Ascending aorta (tissue), 2 donors: ENCODE measurements at regions of chr2 and their contacts with region 1.

Region 1: GRCh38 chr2:11129598-11130449 is 25.4 kb upstream of the SLC66A3 start:
- DNase-seq: no peak
- H3K4me3 ChIP-seq: peak overlapping the region; percentile 51 to 54
- H3K27ac ChIP-seq: no peak overlapping the region
- H3K4me1 ChIP-seq: peaks cover 4 to 24% of the 10 kb centered on the region in 2 donors
- H3K27me3 ChIP-seq: no peaks in the 10 kb centered on the region
- CTCF ChIP-seq: no peak

Region 2: DNA sequence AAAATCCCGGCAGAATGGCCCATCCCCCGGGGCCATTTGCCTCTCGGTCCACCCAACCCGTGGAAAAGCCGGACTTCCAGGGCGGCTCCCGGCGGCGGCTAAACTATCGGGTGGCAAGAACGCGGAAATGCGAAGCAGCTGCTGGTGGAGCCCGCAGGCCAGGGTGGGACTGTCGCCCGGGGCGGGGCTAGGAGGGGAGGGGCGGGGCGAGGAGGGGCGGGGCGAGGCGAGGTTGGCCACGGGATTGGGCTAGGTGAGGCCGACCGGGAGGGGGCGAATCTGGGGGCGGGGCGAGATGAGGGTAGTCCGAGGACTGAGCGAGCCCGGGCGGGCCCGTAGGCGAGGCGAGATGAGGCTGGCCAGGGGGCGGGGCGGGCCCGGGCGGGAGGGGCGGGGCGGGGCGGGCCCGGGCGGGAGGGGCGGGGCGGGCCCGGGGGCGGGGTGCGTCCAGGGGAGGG is 25.1 kb after region 1 on chr2:
- intact Hi-C with region 1: loop called (anchors 1 kb)
- DNase-seq: peak; percentile 88 to 98
- H3K4me3 ChIP-seq: peak overlapping the region; percentile 71 to 85
- H3K27ac ChIP-seq: peak overlapping the region; percentile 96
- H3K4me1 ChIP-seq: peaks cover 4 to 18% of the 10 kb centered on the region in 2 donors
- H3K27me3 ChIP-seq: no peaks in the 10 kb centered on the region
- CTCF ChIP-seq: no peak

Region 3: DNA sequence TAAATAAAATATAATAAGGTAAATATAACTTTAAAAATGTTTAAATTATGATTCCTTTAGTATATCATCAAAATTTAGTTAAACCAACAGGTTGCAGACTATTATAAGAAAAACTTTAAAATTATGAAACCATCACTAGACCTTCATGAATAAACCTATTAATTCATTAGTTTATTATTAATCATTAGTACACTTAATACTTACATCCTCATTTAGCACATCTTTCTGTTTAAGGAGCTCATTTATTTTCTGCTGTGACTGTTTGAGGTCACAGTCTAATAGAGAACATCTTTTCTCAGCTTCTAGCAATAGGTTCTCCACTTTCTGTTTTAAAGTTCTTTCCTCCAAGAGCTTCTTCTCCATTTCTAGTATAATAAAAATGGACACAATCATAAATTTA is 78.3 kb after region 1 on chr2:
- intact Hi-C with region 1: loop called (anchors 5 kb)
- DNase-seq: no peak
- H3K4me3 ChIP-seq: no peak overlapping the region
- H3K27ac ChIP-seq: no peak overlapping the region
- H3K4me1 ChIP-seq: no peaks in the 10 kb centered on the region
- H3K27me3 ChIP-seq: no peaks in the 10 kb centered on the region
- CTCF ChIP-seq: no peak

Region 4: GRCh38 chr2:11411768-11412448 is 282.1 kb after region 1 on chr2:
- intact Hi-C with region 1: loop called (anchors 1 kb)
- DNase-seq: peak in 1 of 2 donors; percentile 79
- H3K4me3 ChIP-seq: peak overlapping the region; percentile 44 to 59
- H3K27ac ChIP-seq: no peak overlapping the region
- H3K4me1 ChIP-seq: peaks cover 4 to 16% of the 10 kb centered on the region in 2 donors
- H3K27me3 ChIP-seq: no peaks in the 10 kb centered on the region
- CTCF ChIP-seq: peak; percentile 62 to 96 (median 83)

Region 5: DNA sequence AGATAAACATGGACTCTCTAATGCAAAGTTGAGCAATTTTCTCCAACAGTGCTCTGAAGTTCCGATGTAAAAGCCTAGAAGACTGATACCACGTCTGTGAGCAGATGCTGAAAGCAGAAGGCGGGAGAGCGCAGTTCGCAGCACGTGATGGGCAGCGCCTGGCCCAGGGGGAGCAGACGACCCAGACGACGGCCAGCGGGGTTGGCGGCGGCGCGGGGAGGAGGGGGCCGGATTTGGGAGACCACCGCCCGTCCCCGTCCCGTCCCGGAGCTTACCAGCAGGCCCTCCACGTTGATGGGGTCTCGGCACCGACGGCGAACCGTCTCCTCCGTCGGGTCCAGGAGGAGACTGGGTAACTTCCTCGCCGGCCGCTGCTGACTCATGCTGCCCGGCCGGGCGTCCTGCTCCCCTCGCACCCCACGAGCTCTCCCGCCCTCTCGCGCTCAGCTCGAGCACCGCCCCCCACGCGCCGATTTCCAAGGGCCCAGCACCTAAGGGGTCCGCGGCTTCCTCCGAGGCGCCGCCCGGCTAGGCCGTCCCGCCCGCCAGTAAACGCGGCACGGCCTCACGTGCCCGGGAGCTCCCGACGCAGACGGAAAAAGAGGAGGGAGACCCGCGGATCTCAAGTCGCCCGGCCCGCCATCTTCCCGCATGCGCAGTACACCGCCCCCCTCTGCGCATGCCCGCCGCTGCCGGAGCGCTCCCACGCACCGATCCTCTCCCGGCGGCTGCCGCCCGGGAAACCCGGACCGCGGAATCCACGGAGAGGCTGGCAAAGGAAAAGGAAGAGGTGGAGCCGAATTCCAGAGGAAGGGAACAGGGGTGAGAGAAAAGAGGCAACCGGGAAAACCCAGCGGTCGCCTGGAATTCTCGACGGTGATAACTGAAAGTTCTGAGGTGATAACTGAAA is 335.9 kb after region 1 on chr2 and contains the start of gene E2F6:
- intact Hi-C with region 1: loop called (anchors 5 kb)
- DNase-seq: peak; percentile 78 to 95
- H3K4me3 ChIP-seq: peak within 1 kb of the TSS; percentile 72 to 86
- H3K27ac ChIP-seq: peak within 1 kb of the TSS; percentile 84 to 93
- H3K4me1 ChIP-seq: peaks cover 3 to 20% of the 10 kb centered on the region in 2 donors
- H3K27me3 ChIP-seq: no peaks in the 10 kb centered on the region
- CTCF ChIP-seq: peak in 2 of 3 experiments; percentile 6 to 9
- total RNA-seq, gene E2F6: 1.9 TPM

Region 6: GRCh38 chr2:11589316-11589940 is 459.6 kb after region 1 on chr2:
- intact Hi-C with region 1: no loop called
- DNase-seq: no peak
- H3K4me3 ChIP-seq: no peak overlapping the region
- H3K27ac ChIP-seq: no peak overlapping the region
- H3K4me1 ChIP-seq: no peaks in the 10 kb centered on the region
- H3K27me3 ChIP-seq: no peaks in the 10 kb centered on the region
- CTCF ChIP-seq: no peak

Region 7: GRCh38 chr2:11904029-11904428 is 774.2 kb after region 1 on chr2:
- intact Hi-C with region 1: no loop called
- DNase-seq: no peak
- H3K4me3 ChIP-seq: no peak overlapping the region
- H3K27ac ChIP-seq: no peak overlapping the region
- H3K4me1 ChIP-seq: no peaks in the 10 kb centered on the region
- H3K27me3 ChIP-seq: no peaks in the 10 kb centered on the region
- CTCF ChIP-seq: no peak